ENCODE measurements at regions of chr3 and their contacts with region 1.

Region 1: DNA sequence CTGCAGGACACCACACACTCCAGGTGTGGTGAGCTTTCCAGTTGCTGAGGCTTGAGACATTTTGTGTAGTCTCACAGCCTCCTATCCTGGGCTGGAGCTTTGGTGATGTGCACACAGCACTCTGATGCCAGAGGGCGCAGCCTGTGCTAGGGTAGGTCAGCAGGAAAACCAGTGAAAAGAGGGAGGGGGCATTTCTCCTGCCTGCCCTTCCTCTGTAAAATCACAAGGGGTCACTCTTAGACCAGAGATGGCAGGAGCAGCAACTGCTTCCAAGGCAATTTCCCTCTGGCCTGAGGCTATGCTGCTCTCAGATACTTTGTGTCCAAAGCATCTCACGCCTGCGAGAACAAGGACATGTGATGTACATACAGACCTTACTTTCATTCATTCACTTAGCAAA is 16.5 kb upstream of the MUSTN1 start:
- DNase-seq: peak in 8 of 35 experiments; percentile 4 to 43 (median 10)
- ATAC-seq: peak; percentile 43 to 56 (median 52)
- H3K4me3 ChIP-seq: no peak overlapping the region
- H3K4me3 Mint-ChIP-seq: no peak overlapping the region
- H3K27ac ChIP-seq: no peak overlapping the region
- H3K27ac Mint-ChIP-seq: no peak overlapping the region
- H3K4me1 ChIP-seq: no peaks in the 10 kb centered on the region
- H3K4me1 Mint-ChIP-seq: no peaks in the 10 kb centered on the region
- H3K27me3 ChIP-seq: no peaks in the 10 kb centered on the region
- H3K27me3 Mint-ChIP-seq: no peaks in the 10 kb centered on the region

Region 2: GRCh38 chr3:52870471-52870870 is 19.1 kb after region 1 on chr3:
- CTCF ChIA-PET with region 1: interaction called in 1 of 2 experiments, 15 read pairs
- POLR2A ChIA-PET with region 1: no interaction called
- DNase-seq: no peak
- ATAC-seq: no peak
- H3K4me3 ChIP-seq: no peak overlapping the region
- H3K4me3 Mint-ChIP-seq: no peak overlapping the region
- H3K27ac ChIP-seq: no peak overlapping the region
- H3K27ac Mint-ChIP-seq: no peak overlapping the region
- H3K4me1 ChIP-seq: peaks cover 2 to 8% of the 10 kb centered on the region in 2 experiments
- H3K4me1 Mint-ChIP-seq: peaks cover 25 to 44% (median 27%) of the 10 kb centered on the region in 3 donors
- H3K27me3 ChIP-seq: no peaks in the 10 kb centered on the region
- H3K27me3 Mint-ChIP-seq: no peaks in the 10 kb centered on the region